ENCODE measurements at regions of chr9 and their contacts with region 1.

Region 1: DNA sequence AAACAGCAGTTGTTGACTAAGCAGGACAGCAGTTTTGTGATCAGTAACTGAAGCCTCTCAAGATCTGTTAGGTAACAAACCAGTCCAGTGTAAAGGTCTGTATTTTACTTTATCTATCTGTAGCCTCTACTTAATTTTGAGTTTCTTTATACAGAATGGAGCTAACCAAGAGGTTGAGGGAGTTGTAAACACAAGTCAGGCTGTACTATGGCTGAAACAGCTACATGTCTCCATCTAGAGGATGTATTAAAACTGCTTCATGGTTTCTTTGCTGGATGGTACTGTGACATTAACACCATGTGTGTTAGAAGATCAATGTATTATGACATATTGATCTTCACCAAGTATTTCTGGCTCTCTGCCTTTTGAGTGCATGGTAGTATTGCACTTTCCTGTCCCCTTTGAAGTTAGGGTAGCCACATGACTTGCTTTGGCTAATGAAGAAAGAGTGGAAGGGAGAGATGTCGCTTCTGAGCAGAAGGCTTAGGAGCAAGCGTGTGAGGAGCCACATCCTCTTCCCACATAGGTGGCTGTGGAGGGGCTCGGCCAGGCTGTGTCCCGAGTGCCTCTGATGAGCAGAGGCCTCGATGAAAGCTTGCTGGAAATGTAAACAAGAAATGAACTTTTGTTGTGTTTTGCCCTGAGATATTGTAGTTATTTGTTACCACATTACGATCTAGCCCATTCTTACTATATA is 105.6 kb upstream of the PCA3 start:
- DNase-seq: peak; percentile 24
- H3K4me3 ChIP-seq: no peak overlapping the region
- CTCF ChIP-seq: peak; percentile 57

Region 2: GRCh38 chr9:76393963-76394679 is 264.6 kb before region 1 on chr9 and contains the start of gene RFK:
- CTCF ChIA-PET with region 1: interaction called, 21 read pairs
- POLR2A ChIA-PET with region 1: no interaction called
- DNase-seq: peak; percentile 36
- H3K4me3 ChIP-seq: peak within 1 kb of the TSS; percentile 89
- CTCF ChIP-seq: peak; percentile 60

Region 3: DNA sequence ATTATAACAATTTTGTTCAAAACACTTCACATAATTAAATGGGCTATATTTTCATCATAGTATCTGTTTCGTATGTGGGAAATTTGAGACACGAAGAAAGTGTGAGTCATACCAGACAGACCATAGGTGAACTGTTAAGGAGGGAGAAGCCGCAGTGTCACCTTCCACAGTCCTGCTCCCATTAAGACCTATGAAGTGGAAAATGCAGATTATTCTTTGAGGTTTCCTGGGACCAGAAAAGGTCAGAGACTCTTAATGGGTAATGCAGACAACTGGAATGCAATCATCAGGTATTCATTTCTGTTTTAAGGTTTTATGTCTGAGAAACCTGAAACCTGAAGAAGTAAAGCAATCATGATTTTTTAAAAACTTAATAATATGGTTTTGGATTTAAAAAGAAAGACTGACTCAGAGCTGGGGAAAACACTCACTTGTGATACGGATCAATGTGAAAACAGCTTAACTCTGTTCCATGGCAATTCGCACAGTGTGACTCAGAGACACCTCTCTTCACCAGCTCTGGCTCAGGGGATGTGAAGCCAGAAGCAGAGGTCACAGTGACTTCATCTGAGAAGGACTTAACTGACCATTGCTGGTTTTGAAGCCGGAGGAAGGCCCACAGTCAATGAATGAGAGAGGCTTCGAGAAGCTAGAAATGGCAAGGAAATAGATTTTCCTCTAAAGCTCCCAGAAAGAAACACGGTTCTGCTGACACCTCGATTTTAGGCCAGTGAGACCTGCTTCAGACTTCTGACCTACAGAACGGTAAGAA is 216.9 kb before region 1 on chr9:
- CTCF ChIA-PET with region 1: interaction called, 330 read pairs
- POLR2A ChIA-PET with region 1: no interaction called
- DNase-seq: no peak
- H3K4me3 ChIP-seq: no peak overlapping the region
- CTCF ChIP-seq: no peak

Region 4: DNA sequence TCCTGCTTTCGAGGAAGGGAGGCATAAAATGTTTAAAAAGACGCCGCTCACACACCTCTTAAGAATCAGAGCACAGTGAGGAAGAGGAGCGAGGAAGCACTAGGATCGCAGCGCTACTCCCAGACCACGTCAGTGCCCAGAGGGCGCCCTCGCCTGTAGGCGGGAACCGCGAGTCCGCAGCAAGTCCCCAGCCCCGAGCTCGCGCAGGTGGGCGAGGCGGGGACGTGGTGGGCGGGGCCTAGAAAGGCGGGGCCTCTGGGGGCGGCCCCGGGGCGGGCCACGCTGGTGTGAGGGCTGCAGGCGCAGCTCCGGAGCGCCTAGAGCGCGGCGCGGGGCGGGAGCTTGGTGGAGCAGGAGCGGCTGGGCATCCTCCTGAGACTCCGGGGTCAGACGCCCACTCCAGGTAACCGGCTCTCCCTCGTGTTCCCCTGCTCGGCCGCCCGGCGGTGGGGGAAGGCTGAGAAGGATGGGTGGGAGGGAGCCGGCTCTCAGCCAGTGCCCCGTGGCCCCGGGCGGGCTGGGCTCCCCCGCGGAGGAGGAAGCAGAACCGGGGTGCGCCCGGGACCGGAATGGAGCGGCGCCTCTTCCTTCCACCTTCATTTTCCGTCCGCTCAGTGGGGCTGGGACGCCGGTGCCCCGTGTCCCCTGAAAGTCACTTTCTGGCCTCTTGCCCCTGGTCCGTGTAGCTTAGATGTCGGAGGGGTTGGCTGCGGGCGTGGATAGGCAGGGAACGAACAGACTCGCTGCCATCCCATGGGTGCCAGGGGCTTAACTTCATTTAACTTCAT is 199.6 kb before region 1 on chr9 and contains the start of gene GCNT1:
- CTCF ChIA-PET with region 1: interaction called, 27 read pairs
- POLR2A ChIA-PET with region 1: no interaction called
- DNase-seq: no peak
- H3K4me3 ChIP-seq: peak within 1 kb of the TSS; percentile 84
- CTCF ChIP-seq: peak; percentile 52

Region 5: DNA sequence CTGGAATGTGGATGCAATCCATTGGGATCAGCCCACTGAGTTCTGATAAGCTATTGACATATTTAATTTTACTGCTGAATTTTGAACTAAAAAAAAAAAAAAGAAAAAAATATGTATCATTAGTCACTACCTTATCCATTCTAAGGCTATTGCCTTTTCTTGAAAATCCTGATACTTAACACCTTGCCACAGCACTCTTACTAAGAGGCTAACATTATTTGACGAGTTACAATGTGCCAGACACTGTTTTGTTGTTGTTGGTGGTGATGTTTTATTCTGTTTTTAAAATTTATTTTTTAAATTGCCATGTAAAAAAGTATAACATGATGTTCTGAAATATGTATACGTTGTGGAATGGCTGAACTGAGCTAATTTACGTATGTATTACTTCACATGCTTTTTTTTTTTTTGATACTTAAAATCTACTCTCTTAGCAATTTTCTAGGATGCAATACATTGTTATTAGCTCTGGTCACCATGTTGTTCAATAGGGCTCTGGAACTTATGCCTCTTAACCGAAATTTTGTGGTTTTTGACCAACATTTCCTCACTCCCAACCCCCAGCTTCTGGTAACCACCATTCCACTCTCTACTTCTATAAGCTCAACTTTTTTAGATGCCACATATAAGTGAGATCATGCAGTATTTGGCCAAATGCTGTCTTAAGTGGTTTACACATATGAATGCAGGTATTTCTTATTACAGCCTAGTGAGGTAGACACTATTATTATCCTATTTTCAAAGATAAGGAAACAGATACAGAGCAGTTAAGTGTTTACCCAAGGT is 29.3 kb before region 1 on chr9:
- CTCF ChIA-PET with region 1: no interaction called
- POLR2A ChIA-PET with region 1: no interaction called
- DNase-seq: no peak
- H3K4me3 ChIP-seq: no peak overlapping the region
- CTCF ChIP-seq: no peak

Region 6: GRCh38 chr9:76704593-76705204 is 46.0 kb after region 1 on chr9:
- CTCF ChIA-PET with region 1: interaction called, 179 read pairs
- POLR2A ChIA-PET with region 1: interaction called, 3 read pairs
- DNase-seq: peak; percentile 86
- H3K4me3 ChIP-seq: no peak overlapping the region
- CTCF ChIP-seq: peak; percentile 40